Uterus (tissue), 4 donors: ENCODE measurements at regions of chr20 and their contacts with region 1.

Region 1: DNA sequence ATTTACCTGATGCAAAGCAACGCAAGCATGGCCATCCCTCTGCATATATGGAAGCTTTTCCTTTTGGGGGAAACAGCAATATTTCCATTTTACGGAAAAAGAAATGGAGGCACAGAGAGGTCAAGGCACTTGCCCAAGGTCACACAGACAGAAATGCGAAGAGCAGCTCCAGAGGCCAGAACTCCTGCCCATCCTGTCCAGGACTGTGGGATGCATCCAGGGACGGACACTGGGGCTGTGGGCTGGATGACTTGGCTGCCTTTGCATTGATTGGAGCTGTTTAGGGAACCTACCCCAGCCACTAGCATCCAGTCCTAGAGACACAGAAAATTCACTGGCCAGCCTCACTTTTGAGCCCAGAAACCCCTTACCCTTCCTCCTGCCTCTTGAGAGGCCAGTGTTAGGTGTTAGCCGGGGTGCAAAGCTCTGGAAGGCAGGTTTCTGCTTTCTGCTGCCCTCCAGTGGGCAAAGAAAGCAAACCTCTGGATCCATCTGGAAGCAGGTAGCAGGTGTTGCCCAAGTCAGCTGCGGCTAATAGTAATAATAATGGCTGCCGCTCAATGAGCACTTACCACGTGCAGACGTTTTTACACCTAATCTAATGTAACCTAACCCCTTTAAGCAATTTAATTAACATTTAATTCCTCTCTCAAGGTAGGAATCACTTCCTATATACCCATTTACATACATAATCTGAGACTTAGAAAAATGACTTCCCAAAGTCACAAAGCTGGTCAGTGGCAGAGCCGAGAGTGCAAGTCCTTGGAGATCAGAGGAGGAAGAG is 31.7 kb upstream of the CCN5 start:
- DNase-seq: no peak
- H3K4me3 ChIP-seq: no peak overlapping the region
- H3K27ac ChIP-seq: no peak overlapping the region
- H3K4me1 ChIP-seq: no peaks in the 10 kb centered on the region
- H3K27me3 ChIP-seq: no peaks in the 10 kb centered on the region
- CTCF ChIP-seq: peak in 3 of 4 experiments; percentile 23 to 33 (median 32)
- POLR2A ChIP-seq: no peak

Region 2: DNA sequence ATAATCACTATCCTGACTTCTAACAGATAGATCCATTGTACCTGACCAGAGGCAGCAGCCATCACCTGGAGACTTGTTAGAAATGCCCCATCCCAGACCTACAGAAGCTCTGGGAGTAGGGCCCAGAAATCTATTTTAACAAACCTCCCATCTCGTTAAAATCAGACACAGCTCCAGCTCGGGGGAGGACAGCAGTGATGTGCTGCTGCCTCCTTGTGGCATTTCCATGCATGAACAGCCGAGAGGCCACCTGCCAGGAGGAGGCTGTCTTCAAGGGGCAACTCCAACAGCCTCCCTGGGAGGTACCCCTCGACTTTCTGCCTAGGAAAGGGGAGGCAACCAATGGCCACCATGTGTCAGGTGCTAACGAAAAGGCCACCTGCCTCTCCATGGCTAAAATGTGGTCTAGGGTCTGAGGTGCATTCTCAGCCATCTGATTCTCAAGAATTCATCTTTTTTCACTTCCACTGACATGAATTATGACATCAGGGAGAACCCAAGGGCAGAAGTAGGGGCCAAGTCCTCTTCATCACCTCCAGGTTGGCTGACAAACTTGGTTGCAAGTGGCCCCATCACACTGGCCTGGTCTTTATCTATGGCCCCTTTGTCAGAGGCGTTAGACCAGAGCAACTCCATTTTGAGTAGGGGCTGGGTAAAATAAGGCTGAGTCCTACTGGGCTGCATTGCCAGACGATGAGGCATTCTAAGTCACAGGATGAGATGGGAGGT is 50.0 kb after region 1 on chr20:
- intact Hi-C with region 1: loop called (anchors 5 kb)
- DNase-seq: peak; percentile 64 to 74
- H3K4me3 ChIP-seq: no peak overlapping the region
- H3K27ac ChIP-seq: no peak overlapping the region
- H3K4me1 ChIP-seq: no peaks in the 10 kb centered on the region
- H3K27me3 ChIP-seq: no peaks in the 10 kb centered on the region
- CTCF ChIP-seq: peak; percentile 85 to 96 (median 94)
- POLR2A ChIP-seq: no peak

Region 3: DNA sequence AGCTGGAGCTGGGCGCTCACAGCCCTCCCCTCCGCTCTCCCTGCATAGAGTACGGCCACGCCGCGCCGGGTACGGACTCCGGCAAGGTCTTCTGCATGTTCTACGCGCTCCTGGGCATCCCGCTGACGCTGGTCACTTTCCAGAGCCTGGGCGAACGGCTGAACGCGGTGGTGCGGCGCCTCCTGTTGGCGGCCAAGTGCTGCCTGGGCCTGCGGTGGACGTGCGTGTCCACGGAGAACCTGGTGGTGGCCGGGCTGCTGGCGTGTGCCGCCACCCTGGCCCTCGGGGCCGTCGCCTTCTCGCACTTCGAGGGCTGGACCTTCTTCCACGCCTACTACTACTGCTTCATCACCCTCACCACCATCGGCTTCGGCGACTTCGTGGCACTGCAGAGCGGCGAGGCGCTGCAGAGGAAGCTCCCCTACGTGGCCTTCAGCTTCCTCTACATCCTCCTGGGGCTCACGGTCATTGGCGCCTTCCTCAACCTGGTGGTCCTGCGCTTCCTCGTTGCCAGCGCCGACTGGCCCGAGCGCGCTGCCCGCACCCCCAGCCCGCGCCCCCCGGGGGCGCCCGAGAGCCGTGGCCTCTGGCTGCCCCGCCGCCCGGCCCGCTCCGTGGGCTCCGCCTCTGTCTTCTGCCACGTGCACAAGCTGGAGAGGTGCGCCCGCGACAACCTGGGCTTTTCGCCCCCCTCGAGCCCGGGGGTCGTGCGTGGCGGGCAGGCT is 66.8 kb after region 1 on chr20:
- intact Hi-C with region 1: no loop called
- DNase-seq: no peak
- H3K4me3 ChIP-seq: no peak overlapping the region
- H3K27ac ChIP-seq: no peak overlapping the region
- H3K4me1 ChIP-seq: no peaks in the 10 kb centered on the region
- H3K27me3 ChIP-seq: no peaks in the 10 kb centered on the region
- CTCF ChIP-seq: peak in 1 of 4 experiments; percentile 14
- POLR2A ChIP-seq: no peak

Region 4: GRCh38 chr20:44866703-44867335 is 183.4 kb after region 1 on chr20:
- intact Hi-C with region 1: loop called (anchors 5 kb)
- DNase-seq: no peak
- H3K4me3 ChIP-seq: no peak overlapping the region
- H3K27ac ChIP-seq: no peak overlapping the region
- H3K4me1 ChIP-seq: peaks cover 0 to 11% of the 10 kb centered on the region in 2 donors
- H3K27me3 ChIP-seq: no peaks in the 10 kb centered on the region
- CTCF ChIP-seq: no peak
- POLR2A ChIP-seq: no peak